Heart right ventricle (tissue), 16 donors: ENCODE measurements at regions of chr18 and their contacts with region 1.

Region 1: DNA sequence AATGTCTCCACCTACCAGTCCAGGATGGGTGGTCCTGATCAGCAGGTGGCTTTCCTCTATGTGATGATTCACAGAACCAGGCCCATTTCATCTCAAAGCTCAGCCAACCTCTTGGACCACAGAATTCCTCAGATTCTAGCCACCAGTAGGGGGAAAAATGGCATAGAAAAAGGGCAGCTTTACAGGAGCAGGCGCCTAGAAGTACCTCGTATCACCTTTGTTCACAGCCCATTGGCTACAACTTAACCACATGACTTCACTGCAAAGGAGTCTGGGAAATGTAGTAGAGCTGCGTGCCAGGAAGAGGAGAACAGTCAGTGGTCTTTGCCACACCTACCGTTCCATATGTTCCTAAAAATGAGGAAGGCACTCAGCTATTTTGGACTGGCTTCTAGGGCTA is 62.8 kb upstream of the DTNA start:
- DNase-seq: no peak
- ATAC-seq: no peak
- H3K4me3 ChIP-seq: no peak overlapping the region
- H3K27ac ChIP-seq: no peak overlapping the region
- H3K4me1 ChIP-seq: peaks cover 0 to 50% (median 26%) of the 10 kb centered on the region in 9 donors
- H3K27me3 ChIP-seq: no peaks in the 10 kb centered on the region
- CTCF ChIP-seq: no peak

Region 2: DNA sequence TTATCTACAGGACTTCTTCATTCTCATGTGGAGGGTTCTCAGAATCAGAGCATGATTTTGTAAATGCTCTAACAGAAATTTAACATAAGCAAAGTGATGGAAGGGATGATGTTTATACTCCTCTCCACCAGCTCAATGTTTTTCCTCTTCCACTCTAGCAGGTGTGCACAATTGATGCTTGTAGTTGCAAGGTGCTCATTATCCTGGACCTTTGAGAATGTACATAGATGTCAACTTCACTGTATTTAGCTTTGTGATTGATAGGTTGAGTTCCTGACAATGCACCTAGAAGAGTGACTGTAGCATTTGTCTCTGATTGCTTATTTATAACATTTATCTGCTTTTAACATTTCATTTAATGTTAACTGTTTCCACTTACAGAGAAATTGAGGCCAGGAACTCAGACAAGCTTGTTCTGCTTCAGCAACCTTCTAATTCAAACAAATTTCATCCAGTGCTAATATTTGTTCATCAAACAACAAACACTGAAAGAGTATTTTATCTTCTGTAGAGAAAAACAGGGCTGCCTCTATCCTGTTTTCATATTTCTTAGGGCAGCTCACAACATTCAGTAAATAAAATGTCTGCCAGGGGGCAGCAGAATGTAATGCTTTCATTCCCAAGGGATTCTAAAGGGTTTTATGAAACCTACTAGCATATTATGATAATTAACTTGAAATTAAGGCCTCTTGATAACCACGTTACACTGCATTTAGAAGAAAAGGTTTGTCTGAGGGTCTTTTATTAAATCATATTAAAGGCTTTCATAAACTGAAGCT is 294.7 kb before region 1 on chr18:
- intact Hi-C with region 1: loop called in 3 of 10 experiments (anchors 5 to 10 kb)
- DNase-seq: no peak
- ATAC-seq: no peak
- H3K4me3 ChIP-seq: no peak overlapping the region
- H3K27ac ChIP-seq: no peak overlapping the region
- H3K4me1 ChIP-seq: no peaks in the 10 kb centered on the region
- H3K27me3 ChIP-seq: no peaks in the 10 kb centered on the region
- CTCF ChIP-seq: peak in 8 of 9 donors; percentile 7 to 59 (median 44)

Region 3: GRCh38 chr18:34576622-34577021 is 70.6 kb before region 1 on chr18:
- intact Hi-C with region 1: no loop called
- DNase-seq: no peak
- ATAC-seq: no peak
- H3K4me3 ChIP-seq: no peak overlapping the region
- H3K27ac ChIP-seq: no peak overlapping the region
- H3K4me1 ChIP-seq: peaks cover 0 to 13% (median 4%) of the 10 kb centered on the region in 9 donors
- H3K27me3 ChIP-seq: no peaks in the 10 kb centered on the region
- CTCF ChIP-seq: no peak

Region 4: GRCh38 chr18:34971313-34971712 is 324.1 kb after region 1 on chr18:
- intact Hi-C with region 1: no loop called
- DNase-seq: no peak
- ATAC-seq: no peak
- H3K4me3 ChIP-seq: no peak overlapping the region
- H3K27ac ChIP-seq: no peak overlapping the region
- H3K4me1 ChIP-seq: peaks cover 0 to 22% (median 7%) of the 10 kb centered on the region in 9 donors
- H3K27me3 ChIP-seq: peaks cover 0 to 10% (median 0%) of the 10 kb centered on the region in 7 donors
- CTCF ChIP-seq: no peak